BJ (cell line): ENCODE measurements at regions of chr7 and their contacts with region 1.

Region 1: GRCh38 chr7:38369816-38370493 is 96.5 kb upstream of the TARP start:
- DNase-seq: no peak
- H3K4me3 ChIP-seq: no peak overlapping the region
- H3K27me3 ChIP-seq: no peaks in the 10 kb centered on the region; the same call in 1 of the 2 replicates
- CTCF ChIP-seq: peak; percentile 94

Region 2: DNA sequence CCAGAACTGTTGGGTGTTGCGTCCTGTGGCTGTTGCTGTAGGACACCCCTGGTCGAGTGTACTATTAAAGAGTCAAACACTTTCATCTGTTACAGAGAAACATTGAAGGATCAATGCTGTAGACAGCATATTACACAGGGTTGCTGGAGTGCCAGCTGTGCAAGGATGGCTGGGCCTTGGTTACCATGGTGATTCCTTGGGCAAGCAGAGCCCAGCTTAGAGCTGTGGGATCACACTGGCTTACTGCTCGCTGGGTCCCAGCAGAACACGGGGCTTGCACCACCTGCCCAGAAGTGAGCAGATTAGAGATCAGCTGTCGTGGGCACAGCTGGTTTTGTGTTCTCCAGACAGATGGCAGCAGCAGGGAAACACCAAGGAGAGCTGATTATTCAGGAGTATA is 610.4 kb before region 1 on chr7:
- CTCF ChIA-PET with region 1: no interaction called
- POLR2A ChIA-PET with region 1: no interaction called
- DNase-seq: no peak
- H3K4me3 ChIP-seq: no peak overlapping the region
- H3K27me3 ChIP-seq: no peaks in the 10 kb centered on the region
- CTCF ChIP-seq: no peak

Region 3: GRCh38 chr7:38335492-38336147 is 34.3 kb before region 1 on chr7:
- CTCF ChIA-PET with region 1: interaction called, 14 read pairs
- POLR2A ChIA-PET with region 1: no interaction called
- DNase-seq: peak; percentile 25
- H3K4me3 ChIP-seq: no peak overlapping the region
- H3K27me3 ChIP-seq: no peaks in the 10 kb centered on the region
- CTCF ChIP-seq: peak; percentile 100

Region 4: GRCh38 chr7:38382684-38383083 is 12.7 kb after region 1 on chr7:
- CTCF ChIA-PET with region 1: interaction called, 77 read pairs
- POLR2A ChIA-PET with region 1: no interaction called
- DNase-seq: peak; percentile 20
- H3K4me3 ChIP-seq: no peak overlapping the region
- H3K27me3 ChIP-seq: no peaks in the 10 kb centered on the region
- CTCF ChIP-seq: no peak

Region 5: GRCh38 chr7:38410056-38410455 is 40.1 kb after region 1 on chr7:
- CTCF ChIA-PET with region 1: no interaction called
- POLR2A ChIA-PET with region 1: no interaction called
- DNase-seq: no peak
- H3K4me3 ChIP-seq: no peak overlapping the region
- H3K27me3 ChIP-seq: no peaks in the 10 kb centered on the region
- CTCF ChIP-seq: no peak